ENCODE measurements at regions of chr15 and their contacts with region 1.

Region 1: DNA sequence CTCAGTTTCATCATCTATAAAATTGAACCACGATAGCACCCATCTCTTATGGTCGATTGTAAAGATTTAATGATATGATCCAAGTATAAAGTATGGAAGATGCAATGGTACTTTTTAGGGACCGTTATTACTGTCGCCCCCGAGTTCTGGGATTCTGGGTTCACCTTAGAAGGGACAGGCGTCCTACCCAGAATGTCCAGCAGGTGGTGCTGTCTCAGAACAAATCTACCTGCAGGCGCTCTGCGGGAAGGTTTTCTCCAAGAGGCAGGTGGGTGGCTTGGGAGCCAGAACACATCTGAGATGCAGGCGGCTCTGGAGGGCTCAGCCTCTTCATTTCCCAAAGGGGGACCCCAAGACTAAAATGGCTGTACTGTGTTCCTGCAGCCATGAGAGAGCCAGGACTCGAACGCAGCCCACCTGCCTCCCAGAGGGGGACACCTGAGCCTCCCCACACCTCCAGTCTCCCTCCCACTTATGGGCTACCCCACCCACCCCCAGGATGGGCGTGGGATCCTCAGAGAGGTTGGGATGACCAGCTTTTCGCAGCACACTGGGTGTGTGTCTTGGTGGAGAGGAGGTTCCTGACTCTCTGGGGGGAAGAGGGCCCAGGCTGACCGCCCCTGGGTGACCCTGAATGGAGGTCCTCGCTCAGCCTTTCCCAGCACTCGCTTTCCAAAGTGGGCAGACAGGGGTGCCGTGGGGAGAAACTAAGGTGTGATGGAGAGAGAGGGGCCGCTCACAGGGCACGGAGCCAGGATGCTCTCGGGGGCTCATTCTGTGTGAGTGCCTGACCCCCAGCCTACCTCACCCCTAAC is 28.1 kb upstream of the CORO2B start:
- DNase-seq: peak; percentile 48
- ATAC-seq: peak; percentile 81
- H3K4me3 ChIP-seq: no peak overlapping the region
- H3K27ac ChIP-seq: no peak overlapping the region
- H3K4me1 ChIP-seq: no peaks in the 10 kb centered on the region
- H3K27me3 ChIP-seq: peaks cover 11% of the 10 kb centered on the region
- CTCF ChIP-seq: peak; percentile 83 to 90 (median 89)
- POLR2A ChIP-seq: no peak
- RAD21 ChIP-seq: peak; percentile 84

Region 2: DNA sequence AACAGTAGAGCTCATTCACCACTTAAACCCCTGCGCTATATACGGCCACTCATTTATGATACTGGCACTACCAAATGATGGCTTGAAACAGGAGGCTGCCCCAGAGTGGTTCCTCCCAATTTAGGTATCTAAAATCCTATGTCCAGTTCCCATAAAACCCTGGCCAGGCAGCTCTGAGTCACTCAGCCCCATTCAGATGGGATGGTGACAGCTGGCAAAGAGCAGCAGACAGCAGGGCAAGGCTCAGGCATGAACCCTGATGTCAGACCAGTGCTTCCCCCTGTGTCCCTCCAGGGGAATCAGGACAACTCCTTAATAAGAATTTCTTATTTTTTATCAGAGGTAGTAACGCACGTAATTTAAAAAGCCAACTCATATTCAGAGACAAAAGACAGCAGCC is 633.7 kb before region 1 on chr15:
- CTCF ChIA-PET with region 1: no interaction called
- POLR2A ChIA-PET with region 1: no interaction called
- RAD21 ChIA-PET with region 1: no interaction called
- intact Hi-C with region 1: no loop called
- DNase-seq: no peak
- ATAC-seq: no peak
- H3K4me3 ChIP-seq: no peak overlapping the region
- H3K27ac ChIP-seq: no peak overlapping the region
- H3K4me1 ChIP-seq: no peaks in the 10 kb centered on the region
- H3K27me3 ChIP-seq: no peaks in the 10 kb centered on the region
- CTCF ChIP-seq: no peak
- POLR2A ChIP-seq: no peak
- RAD21 ChIP-seq: no peak

Region 3: DNA sequence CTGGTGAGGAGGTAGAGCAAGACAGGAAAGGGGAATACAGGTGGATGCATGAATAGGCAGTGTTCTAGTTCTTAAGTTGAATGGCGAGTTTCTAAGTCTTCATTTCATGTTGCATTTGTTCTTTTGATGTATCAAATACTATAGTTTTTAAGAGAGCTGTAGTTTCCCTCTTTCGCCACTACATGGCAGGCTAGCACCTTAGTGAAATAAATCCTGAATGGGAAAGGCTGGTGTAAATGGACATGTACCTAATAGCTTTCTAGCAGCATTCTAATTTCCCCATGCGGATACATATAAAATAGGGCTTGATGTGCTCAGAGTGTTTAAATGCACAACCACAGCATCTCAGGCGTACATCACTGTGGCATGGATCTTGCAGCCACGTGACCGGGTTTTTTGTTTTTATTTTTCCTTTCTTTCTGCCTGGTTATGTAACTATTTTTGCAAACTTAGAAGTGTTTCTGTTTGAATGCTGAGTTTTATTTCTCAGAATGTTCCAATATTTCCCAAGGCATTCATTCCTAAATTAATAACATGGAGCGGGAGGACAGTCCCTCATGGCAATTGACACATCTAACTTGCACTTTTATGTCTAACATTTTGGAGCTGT is 297.7 kb before region 1 on chr15:
- CTCF ChIA-PET with region 1: interaction called, 11 read pairs
- POLR2A ChIA-PET with region 1: no interaction called
- RAD21 ChIA-PET with region 1: no interaction called
- intact Hi-C with region 1: loop called (anchors 1 kb)
- DNase-seq: peak; percentile 79
- ATAC-seq: peak; percentile 97
- H3K4me3 ChIP-seq: no peak overlapping the region
- H3K27ac ChIP-seq: no peak overlapping the region
- H3K4me1 ChIP-seq: no peaks in the 10 kb centered on the region
- H3K27me3 ChIP-seq: no peaks in the 10 kb centered on the region
- CTCF ChIP-seq: peak; percentile 78 to 88 (median 87)
- POLR2A ChIP-seq: no peak
- RAD21 ChIP-seq: peak; percentile 90

Region 4: DNA sequence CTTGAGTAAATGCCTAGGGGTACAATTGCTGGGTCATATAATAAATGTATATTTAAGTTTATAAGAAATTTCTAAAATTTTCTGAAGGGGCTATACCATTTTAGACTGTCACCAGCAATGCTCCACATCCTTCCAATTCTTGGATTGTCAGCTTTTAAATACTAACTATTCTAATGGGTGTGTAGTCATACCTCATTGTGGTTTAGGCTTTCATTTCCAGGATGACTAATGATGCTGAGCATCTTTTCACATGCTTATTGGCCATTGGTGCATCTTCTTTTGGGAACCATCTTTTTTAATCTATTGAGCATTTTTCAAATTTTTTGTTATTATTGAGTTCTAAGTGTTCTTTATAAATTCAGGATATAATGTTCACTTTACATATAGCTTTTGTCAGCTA is 24.4 kb before region 1 on chr15:
- CTCF ChIA-PET with region 1: interaction called, 13 read pairs
- POLR2A ChIA-PET with region 1: no interaction called
- RAD21 ChIA-PET with region 1: no interaction called
- intact Hi-C with region 1: no loop called
- DNase-seq: no peak
- ATAC-seq: no peak
- H3K4me3 ChIP-seq: no peak overlapping the region
- H3K27ac ChIP-seq: no peak overlapping the region
- H3K4me1 ChIP-seq: no peaks in the 10 kb centered on the region
- H3K27me3 ChIP-seq: no peaks in the 10 kb centered on the region
- CTCF ChIP-seq: no peak
- POLR2A ChIP-seq: no peak
- RAD21 ChIP-seq: no peak

Region 5: GRCh38 chr15:68730471-68730919 is 179.8 kb after region 1 on chr15:
- CTCF ChIA-PET with region 1: no interaction called
- POLR2A ChIA-PET with region 1: no interaction called
- RAD21 ChIA-PET with region 1: no interaction called
- intact Hi-C with region 1: loop called (anchors 5 kb)
- DNase-seq: peak; percentile 52
- ATAC-seq: peak; percentile 89
- H3K4me3 ChIP-seq: no peak overlapping the region
- H3K27ac ChIP-seq: no peak overlapping the region
- H3K4me1 ChIP-seq: no peaks in the 10 kb centered on the region; a peak in 1 of 4 replicates
- H3K27me3 ChIP-seq: no peaks in the 10 kb centered on the region
- CTCF ChIP-seq: peak; percentile 55 to 69 (median 57); a peak in 5 of 6 replicates
- POLR2A ChIP-seq: no peak
- RAD21 ChIP-seq: peak; percentile 78

Region 6: DNA sequence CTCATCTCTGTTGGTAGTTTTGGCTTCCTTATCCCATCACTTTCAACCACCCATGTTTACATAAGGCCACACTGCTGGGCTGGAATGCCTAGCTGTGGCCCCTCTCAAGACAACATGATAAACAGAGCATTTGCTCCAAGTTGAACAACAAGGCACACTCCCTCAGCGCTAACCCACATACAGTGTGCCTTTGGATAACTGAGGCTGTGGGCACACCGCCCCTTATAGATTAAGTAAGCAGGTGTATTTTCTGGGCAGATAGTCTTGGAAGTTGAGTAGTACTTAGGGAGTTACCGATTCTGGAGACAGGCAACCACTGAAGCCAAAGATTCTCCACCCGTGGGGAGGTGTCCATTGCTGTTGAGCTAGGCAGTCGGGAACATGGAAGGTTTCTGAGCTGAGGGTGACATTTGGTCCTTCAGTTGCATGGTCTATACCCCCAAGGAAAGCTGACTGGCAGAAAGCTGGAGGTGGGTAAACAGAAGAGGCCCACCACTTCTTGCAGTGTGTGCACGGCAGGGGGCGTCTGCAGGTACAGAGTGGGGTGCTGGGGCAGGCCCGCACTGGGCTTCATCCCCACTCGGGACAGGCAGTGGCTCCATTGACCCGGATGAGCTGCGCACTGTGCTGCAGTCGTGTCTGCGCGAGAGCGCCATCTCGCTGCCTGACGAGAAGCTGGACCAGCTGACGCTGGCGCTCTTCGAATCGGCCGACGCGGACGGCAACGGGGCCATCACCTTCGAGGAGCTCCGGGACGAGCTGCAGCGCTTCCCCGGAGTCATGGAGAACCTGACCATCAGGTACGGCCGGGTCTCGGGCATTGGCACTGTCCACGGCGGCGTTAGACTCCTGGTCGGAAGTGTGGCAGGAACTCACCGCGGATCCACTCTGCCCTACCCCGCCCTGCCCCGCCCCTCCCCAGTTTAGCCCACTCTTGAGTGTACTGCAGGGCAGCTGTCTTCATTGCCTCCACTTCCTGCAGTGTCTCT is 480.6 kb after region 1 on chr15:
- CTCF ChIA-PET with region 1: interaction called, 11 read pairs
- POLR2A ChIA-PET with region 1: no interaction called
- RAD21 ChIA-PET with region 1: no interaction called
- intact Hi-C with region 1: no loop called
- DNase-seq: peak; percentile 65
- ATAC-seq: peak; percentile 91
- H3K4me3 ChIP-seq: peak overlapping the region; percentile 44 to 59
- H3K27ac ChIP-seq: no peak overlapping the region
- H3K4me1 ChIP-seq: peaks cover 7 to 49% of the 10 kb centered on the region in 2 experiments; a peak in 3 of 4 replicates
- H3K27me3 ChIP-seq: no peaks in the 10 kb centered on the region
- CTCF ChIP-seq: peak; percentile 47 to 71 (median 71); a peak in 5 of 6 replicates
- POLR2A ChIP-seq: no peak
- RAD21 ChIP-seq: peak; percentile 61

Measured in HCT116 (cell line).